Endothelial cell of umbilical vein (primary cell): ENCODE measurements at regions of chr20 and their contacts with region 1.

Region 1: GRCh38 chr20:4519530-4519929 is 202.2 kb upstream of the PRND start:
- DNase-seq: peak; percentile 24
- H3K4me3 ChIP-seq: no peak overlapping the region
- H3K27ac ChIP-seq: no peak overlapping the region
- H3K4me1 ChIP-seq: peaks cover under 1% of the 10 kb centered on the region
- H3K27me3 ChIP-seq: no peaks in the 10 kb centered on the region
- CTCF ChIP-seq: peak; percentile 34 to 63
- POLR2A ChIP-seq: no peak

Region 2: DNA sequence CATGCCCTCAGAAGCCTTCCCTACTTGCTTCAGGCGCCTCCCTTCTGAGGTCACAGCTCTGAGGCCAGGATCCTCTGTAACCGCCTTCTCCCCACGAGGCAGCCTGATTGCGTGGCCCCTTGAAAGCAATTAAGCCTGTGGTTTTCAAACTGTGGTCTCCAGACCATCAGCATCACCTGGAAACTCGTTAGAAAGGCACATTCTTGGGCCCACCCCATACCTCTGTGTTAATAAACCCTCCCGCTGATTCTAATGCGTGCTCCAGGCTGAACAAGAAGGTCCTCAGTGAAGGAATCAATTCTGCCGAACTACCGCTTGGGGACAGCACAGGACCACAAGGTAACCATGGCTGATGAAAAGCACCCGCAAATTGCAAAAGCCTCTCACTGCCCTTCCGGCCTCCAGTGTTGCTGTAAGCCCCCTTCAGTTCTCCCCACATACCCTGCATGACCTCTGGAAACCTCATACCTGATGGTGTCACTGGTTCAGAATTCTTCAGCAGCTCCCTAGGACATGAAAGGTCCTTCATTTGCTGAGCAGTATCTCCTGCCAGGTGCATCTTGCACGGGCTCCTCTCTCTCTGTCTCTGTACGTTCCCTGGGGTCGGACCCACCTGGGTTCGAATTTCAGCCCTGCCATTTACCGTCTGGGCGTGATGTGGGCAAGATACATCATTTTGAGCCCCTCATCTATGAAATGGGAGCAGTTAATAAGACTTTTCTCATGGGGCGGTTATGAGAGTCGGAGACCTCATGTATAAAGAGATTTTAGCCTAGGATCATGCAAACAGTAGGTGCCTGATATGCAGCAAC is 410.8 kb before region 1 on chr20:
- CTCF ChIA-PET with region 1: no interaction called
- POLR2A ChIA-PET with region 1: no interaction called
- dilution Hi-C with region 1: no loop called
- intact Hi-C with region 1: loop called (anchors 1 kb)
- DNase-seq: peak; percentile 79
- H3K4me3 ChIP-seq: no peak overlapping the region
- H3K27ac ChIP-seq: no peak overlapping the region
- H3K4me1 ChIP-seq: peaks cover 6% of the 10 kb centered on the region
- H3K27me3 ChIP-seq: peaks cover 0 to 2% of the 10 kb centered on the region in 2 experiments
- CTCF ChIP-seq: peak; percentile 95 to 97
- POLR2A ChIP-seq: no peak

Region 3: GRCh38 chr20:4844751-4845465 is 325.4 kb after region 1 on chr20:
- CTCF ChIA-PET with region 1: no interaction called
- POLR2A ChIA-PET with region 1: interaction called, 11 read pairs
- dilution Hi-C with region 1: no loop called
- intact Hi-C with region 1: no loop called
- DNase-seq: no peak
- H3K4me3 ChIP-seq: no peak overlapping the region
- H3K27ac ChIP-seq: no peak overlapping the region
- H3K4me1 ChIP-seq: no peaks in the 10 kb centered on the region
- H3K27me3 ChIP-seq: peaks cover 2 to 4% of the 10 kb centered on the region in 2 experiments
- CTCF ChIP-seq: no peak
- POLR2A ChIP-seq: no peak